ENCODE measurements at regions of chr4 and their contacts with region 1.

Region 1: DNA sequence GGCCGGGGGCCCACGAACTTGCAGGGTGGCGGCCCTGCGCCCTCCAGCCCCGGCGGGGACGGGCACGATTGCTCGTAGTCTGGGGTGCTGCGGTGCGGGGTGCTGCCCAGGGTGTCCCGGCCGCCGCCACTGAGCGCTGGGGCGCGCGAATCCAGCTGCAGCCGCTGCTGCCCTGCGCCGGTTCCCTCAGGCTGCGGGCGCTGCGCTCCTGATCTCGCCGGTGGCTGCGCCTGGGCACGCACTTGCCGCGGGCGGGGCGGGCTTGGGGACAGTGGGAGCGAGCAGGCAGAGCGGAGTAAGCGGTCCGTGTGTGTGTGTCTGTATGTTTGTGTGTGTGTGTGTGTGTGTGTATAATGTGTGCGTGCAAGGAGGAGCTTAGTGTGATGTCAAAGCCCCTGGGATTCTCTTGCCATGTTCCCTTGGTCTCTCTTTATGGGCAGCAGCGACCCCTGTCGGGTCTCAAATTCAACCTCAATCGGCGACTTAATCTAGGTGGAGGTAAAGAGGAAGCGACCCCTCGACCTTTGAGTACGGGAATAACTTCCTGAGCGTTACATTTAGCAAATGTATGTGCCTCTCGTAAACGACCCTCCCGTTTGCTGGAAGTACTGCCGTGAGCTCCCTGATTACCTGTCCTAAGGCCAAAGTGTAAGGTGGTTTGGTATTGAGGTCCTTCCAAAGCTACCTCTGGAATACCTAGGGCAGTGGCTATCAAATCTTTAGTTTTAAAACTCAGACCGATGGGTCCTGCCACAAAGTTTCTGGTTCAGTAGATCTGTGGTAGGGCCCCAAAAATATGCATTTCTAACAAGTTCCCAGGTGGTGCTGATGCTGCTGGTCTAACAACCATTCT is at the start of gene RNF150:
- DNase-seq: peak; percentile 47 to 70
- ATAC-seq: peak; percentile 77 to 80
- H3K4me3 ChIP-seq: peak within 1 kb of the TSS; percentile 72 to 94 (median 84)
- H3K27ac ChIP-seq: peak within 1 kb of the TSS; percentile 69 to 81 (median 74)
- H3K4me1 ChIP-seq: peaks cover 21 to 27% of the 10 kb centered on the region in 2 donors
- H3K27me3 ChIP-seq: no peaks in the 10 kb centered on the region
- CTCF ChIP-seq: peak; percentile 68 to 78 (median 71)
- POLR2A ChIP-seq: peak; percentile 34 to 40
- total RNA-seq, gene RNF150: 1.6 to 21.2 (median 4.9) TPM

Region 2: GRCh38 chr4:139184129-139184528 is 1949.2 kb before region 1 on chr4:
- in situ Hi-C with region 1: no loop called
- intact Hi-C with region 1: no loop called
- DNase-seq: no peak
- ATAC-seq: no peak
- H3K4me3 ChIP-seq: no peak overlapping the region
- H3K27ac ChIP-seq: no peak overlapping the region
- H3K4me1 ChIP-seq: peaks cover 0 to 2% of the 10 kb centered on the region in 2 donors
- H3K27me3 ChIP-seq: no peaks in the 10 kb centered on the region
- CTCF ChIP-seq: no peak
- POLR2A ChIP-seq: no peak

Region 3: GRCh38 chr4:140308366-140309123 is 824.8 kb before region 1 on chr4:
- in situ Hi-C with region 1: no loop called
- intact Hi-C with region 1: loop called (anchors 5 kb)
- DNase-seq: peak; percentile 80 to 89
- ATAC-seq: peak; percentile 97 to 98
- H3K4me3 ChIP-seq: peak overlapping the region in 3 of 4 donors; percentile 15 to 38 (median 29)
- H3K27ac ChIP-seq: peak overlapping the region; percentile 82 to 88 (median 87)
- H3K4me1 ChIP-seq: peaks cover 22 to 25% of the 10 kb centered on the region in 2 donors
- H3K27me3 ChIP-seq: no peaks in the 10 kb centered on the region
- CTCF ChIP-seq: no peak
- POLR2A ChIP-seq: no peak

Region 4: DNA sequence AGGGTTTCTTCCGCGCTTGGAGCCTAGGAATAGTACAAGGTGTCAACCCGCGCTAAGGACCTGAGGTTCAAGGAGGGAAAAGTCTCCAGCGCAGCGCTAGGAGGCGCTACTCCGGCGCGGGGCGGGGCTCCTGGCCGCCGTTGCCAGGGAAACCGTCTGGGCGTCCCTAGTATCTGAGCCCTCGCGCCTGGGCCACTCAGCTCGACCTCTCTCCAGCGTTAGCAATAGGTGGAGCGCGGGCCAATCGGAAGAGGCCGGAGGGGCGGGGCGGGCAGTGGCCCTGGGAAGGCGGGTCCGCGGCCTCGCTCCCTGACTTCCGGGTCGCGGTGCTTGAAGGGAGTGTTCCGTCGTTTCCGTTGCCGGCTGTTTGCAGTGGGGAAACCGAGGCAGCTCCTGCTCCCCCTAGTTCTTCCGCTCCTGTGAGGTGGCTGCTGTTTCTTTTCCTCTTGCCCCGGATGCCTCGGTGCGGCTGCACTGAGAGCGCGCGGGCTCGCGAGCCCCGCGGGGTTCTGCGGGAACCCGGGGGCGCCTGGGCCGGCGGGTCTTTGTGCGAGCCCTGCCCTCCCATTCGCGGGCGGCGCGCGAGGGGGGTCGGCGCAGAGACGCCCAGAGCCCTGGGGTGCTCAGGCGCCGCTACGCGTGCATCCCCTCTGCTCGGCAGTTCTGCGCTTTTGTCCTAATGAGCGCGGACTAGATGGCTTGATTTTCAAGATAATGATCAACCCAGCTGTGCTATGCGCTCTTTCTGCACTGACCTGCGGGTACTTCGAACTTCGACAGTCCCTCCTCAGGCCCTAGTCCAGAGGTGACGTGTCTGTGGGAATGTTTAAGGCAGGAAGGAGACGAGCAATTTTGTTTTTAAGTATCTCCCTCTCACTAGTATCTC is 609.3 kb before region 1 on chr4 and contains the start of gene ELMOD2:
- in situ Hi-C with region 1: loop called in 1 of 4 experiments (anchors 25 kb)
- intact Hi-C with region 1: loop called (anchors 5 kb)
- DNase-seq: peak; percentile 97 to 98
- ATAC-seq: peak; percentile 99
- H3K4me3 ChIP-seq: peak within 1 kb of the TSS; percentile 67 to 87 (median 86)
- H3K27ac ChIP-seq: peak within 1 kb of the TSS; percentile 76 to 90 (median 81)
- H3K4me1 ChIP-seq: peaks cover 2 to 18% of the 10 kb centered on the region in 2 donors
- H3K27me3 ChIP-seq: no peaks in the 10 kb centered on the region
- CTCF ChIP-seq: peak; percentile 71 to 94 (median 81)
- POLR2A ChIP-seq: peak in 1 of 2 donors; percentile 34
- total RNA-seq, gene ELMOD2: 3.2 to 13.7 (median 10.9) TPM

Region 5: DNA sequence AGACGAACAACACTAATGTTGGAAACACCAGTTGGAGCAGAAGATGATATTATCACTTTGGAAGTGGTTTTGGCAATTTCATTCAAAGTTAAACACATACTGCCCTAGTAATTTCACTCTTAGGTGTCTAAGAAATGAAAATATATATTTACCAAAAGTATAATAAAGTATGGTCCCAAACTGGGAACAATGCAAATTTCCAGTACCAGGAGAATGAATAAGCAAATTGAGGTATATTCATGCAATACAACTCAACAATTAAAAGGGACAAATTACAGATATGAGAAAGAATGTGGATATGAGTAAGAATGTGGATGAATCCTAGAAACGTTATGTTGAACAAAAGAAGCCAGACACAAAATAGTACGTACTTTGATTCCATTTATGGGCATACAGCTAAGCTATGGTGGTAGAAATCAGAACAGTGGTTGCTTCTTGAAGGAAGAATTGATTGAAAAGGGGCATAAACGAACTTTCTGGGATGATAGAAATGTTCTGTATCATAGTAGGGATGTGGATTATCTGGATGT is 599.4 kb before region 1 on chr4:
- in situ Hi-C with region 1: loop called in 1 of 4 experiments (anchors 25 kb)
- intact Hi-C with region 1: no loop called
- DNase-seq: no peak
- ATAC-seq: no peak
- H3K4me3 ChIP-seq: no peak overlapping the region
- H3K27ac ChIP-seq: no peak overlapping the region
- H3K4me1 ChIP-seq: no peaks in the 10 kb centered on the region
- H3K27me3 ChIP-seq: no peaks in the 10 kb centered on the region
- CTCF ChIP-seq: no peak
- POLR2A ChIP-seq: no peak

Region 6: DNA sequence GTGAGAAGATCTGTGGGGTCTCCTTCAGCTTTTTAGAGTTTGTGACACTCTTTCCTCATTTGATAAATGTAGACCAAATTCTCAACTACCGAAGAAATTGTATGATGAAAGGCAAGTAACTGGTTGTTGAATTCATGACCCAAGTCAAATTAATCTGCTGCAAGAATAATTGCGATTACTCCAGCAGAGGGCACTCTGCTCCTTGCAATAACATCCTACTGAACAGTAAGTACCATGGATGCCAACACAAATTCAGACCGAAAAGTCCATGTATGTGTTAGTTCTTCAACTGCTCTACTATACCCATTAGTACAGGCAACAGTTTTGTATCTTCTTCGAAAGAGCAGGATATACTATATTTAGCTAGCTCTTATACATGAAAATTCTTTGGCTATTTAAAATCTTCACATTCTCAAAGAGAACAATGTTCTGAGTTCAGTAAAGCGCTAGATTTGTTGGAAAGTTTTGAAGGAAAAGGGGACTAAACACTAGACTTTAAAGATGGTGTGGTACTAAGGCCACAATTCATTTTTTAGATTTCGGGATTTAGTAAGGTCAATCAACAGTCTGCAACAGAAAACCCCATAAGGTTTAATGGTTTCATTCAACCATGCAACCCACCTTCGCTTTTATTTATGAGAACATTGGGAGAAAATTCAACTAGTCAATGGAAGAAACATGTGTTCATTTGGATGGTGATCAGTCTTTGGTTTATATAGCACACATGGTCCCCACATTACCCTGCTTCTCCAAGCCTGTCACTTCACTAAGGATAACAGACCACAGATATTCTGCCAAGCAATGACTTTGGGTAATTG is 271.8 kb before region 1 on chr4:
- in situ Hi-C with region 1: loop called (anchors 5 to 10 kb)
- intact Hi-C with region 1: loop called (anchors 1 kb)
- DNase-seq: peak; percentile 38 to 55
- ATAC-seq: peak; percentile 83 to 91
- H3K4me3 ChIP-seq: no peak overlapping the region
- H3K27ac ChIP-seq: no peak overlapping the region
- H3K4me1 ChIP-seq: peaks cover under 1 to 4% of the 10 kb centered on the region in 2 donors
- H3K27me3 ChIP-seq: no peaks in the 10 kb centered on the region
- CTCF ChIP-seq: peak; percentile 68 to 81 (median 76)
- POLR2A ChIP-seq: no peak

Region 7: DNA sequence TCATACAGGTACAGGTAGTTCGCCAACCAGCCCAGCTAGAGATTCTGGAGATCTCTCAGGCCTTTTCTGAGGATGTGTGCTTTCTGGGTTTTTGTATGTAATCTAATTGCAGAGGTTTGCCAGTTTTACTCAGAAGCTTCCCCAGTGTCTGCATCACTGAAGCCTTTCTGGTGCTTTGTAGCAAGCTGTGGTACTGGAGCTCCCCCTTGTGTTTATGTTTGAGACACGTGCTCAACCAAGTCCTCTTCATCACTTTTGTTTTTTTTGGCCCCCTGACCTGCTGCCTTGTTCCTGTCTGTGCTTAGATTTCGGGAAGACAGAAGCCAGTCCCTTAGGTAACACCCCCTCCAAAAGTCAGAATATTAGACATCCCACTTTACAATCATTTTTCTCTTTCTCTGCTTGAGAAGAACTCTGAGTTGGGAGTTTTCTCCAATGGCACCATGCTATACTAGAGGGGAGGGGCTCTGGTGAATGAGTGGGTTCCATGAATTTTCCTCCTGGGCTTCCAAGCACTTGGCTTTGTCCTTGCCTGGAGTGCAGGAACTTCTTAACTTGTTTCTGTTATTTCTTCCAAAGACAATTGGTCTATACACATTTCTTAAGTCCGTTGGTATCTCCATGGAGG is 248.8 kb before region 1 on chr4:
- in situ Hi-C with region 1: no loop called
- intact Hi-C with region 1: loop called (anchors 2 kb)
- DNase-seq: peak in 1 of 2 donors; percentile 11
- ATAC-seq: peak; percentile 44 to 61
- H3K4me3 ChIP-seq: no peak overlapping the region
- H3K27ac ChIP-seq: no peak overlapping the region
- H3K4me1 ChIP-seq: peaks cover 23 to 24% of the 10 kb centered on the region in 2 donors
- H3K27me3 ChIP-seq: no peaks in the 10 kb centered on the region
- CTCF ChIP-seq: peak in 4 of 5 experiments; percentile 52 to 68 (median 57)
- POLR2A ChIP-seq: no peak

Region 8: DNA sequence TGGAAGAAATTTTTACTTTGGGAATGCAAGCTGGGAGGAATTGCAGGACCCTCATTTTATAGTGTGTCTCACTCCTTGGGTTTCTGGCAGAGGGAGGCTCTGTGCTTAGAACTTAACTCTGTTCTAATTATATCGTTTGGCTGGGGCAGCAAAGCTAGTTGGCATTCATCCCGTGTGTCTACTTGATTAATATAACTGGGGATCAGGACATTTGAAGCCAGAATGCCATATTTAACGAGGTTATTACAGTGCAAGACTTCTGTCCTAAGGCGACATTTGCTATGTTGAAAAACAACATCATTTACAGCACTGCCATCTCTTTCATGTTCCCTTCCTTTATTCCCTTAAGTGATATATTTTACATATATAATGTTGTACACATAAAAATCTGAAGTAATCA is 198.1 kb before region 1 on chr4:
- in situ Hi-C with region 1: no loop called
- intact Hi-C with region 1: loop called (anchors 5 kb)
- DNase-seq: peak; percentile 43 to 52
- ATAC-seq: peak; percentile 82 to 90
- H3K4me3 ChIP-seq: peak overlapping the region in 1 of 4 donors; percentile 18
- H3K27ac ChIP-seq: peak overlapping the region in 2 of 4 donors; percentile 24 to 35
- H3K4me1 ChIP-seq: peaks cover 42 to 53% of the 10 kb centered on the region in 2 donors
- H3K27me3 ChIP-seq: no peaks in the 10 kb centered on the region
- CTCF ChIP-seq: no peak
- POLR2A ChIP-seq: no peak

Region 9: DNA sequence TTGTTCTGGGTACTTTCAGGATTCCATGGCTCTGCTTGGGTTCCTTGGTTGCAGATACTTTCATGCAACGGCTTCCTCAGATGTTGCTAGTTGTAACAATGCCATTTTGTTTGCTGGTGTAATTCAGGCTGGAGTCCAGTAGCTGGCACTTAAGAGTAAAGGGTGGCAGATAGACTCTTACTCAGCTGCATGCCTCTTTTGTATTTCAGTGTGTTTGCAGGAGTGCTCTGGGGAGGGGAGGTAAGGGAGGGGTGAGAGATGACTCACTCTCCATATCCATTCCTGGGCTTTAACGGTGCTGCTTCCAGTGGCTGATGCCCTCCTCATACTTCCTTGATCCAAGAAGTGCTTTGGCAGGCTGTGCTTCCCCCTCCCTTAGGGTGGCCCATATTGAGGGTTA is 242.5 kb after region 1 on chr4:
- in situ Hi-C with region 1: no loop called
- intact Hi-C with region 1: no loop called
- DNase-seq: no peak
- ATAC-seq: no peak
- H3K4me3 ChIP-seq: no peak overlapping the region
- H3K27ac ChIP-seq: no peak overlapping the region
- H3K4me1 ChIP-seq: no peaks in the 10 kb centered on the region
- H3K27me3 ChIP-seq: no peaks in the 10 kb centered on the region
- CTCF ChIP-seq: no peak
- POLR2A ChIP-seq: no peak

Measured in gastrocnemius medialis (tissue), 4 donors.